ENCODE measurements at regions of chr11 and their contacts with region 1.

Region 1: GRCh38 chr11:1882519-1883238 is 9.0 kb downstream of the PRR33 start:
- DNase-seq: peak; percentile 97
- H3K4me3 ChIP-seq: no peak overlapping the region; a peak in 1 of 4 replicates
- H3K27ac ChIP-seq: peak overlapping the region in 1 of 2 experiments; percentile 72; a peak in 1 of 4 replicates
- H3K4me1 ChIP-seq: peaks cover 0 to 19% of the 10 kb centered on the region in 2 experiments; a peak in 1 of 4 replicates
- H3K27me3 ChIP-seq: no peaks in the 10 kb centered on the region
- CTCF ChIP-seq: peak; percentile 82
- EP300 ChIP-seq: no peak
- RAD21 ChIP-seq: peak; percentile 89

Region 2: GRCh38 chr11:1837171-1838076 is 45.3 kb before region 1 on chr11:
- CTCF ChIA-PET with region 1: interaction called, 64 read pairs
- POLR2A ChIA-PET with region 1: no interaction called
- DNase-seq: peak; percentile 97
- H3K4me3 ChIP-seq: no peak overlapping the region
- H3K27ac ChIP-seq: peak overlapping the region in 1 of 2 experiments; percentile 60; a peak in 1 of 4 replicates
- H3K4me1 ChIP-seq: peaks cover 0 to 39% of the 10 kb centered on the region in 2 experiments; a peak in 1 of 4 replicates
- H3K27me3 ChIP-seq: no peaks in the 10 kb centered on the region
- CTCF ChIP-seq: peak; percentile 80
- EP300 ChIP-seq: no peak
- RAD21 ChIP-seq: peak; percentile 93

Region 3: GRCh38 chr11:1864831-1865665 is 17.6 kb before region 1 on chr11:
- CTCF ChIA-PET with region 1: interaction called, 12 read pairs
- POLR2A ChIA-PET with region 1: no interaction called
- DNase-seq: peak; percentile 77
- H3K4me3 ChIP-seq: no peak overlapping the region
- H3K27ac ChIP-seq: peak overlapping the region; percentile 50 to 61; a peak in 3 of 4 replicates
- H3K4me1 ChIP-seq: peaks cover 18 to 44% of the 10 kb centered on the region in 2 experiments; a peak in 3 of 4 replicates
- H3K27me3 ChIP-seq: no peaks in the 10 kb centered on the region
- CTCF ChIP-seq: no peak
- EP300 ChIP-seq: no peak
- RAD21 ChIP-seq: no peak

Region 4: DNA sequence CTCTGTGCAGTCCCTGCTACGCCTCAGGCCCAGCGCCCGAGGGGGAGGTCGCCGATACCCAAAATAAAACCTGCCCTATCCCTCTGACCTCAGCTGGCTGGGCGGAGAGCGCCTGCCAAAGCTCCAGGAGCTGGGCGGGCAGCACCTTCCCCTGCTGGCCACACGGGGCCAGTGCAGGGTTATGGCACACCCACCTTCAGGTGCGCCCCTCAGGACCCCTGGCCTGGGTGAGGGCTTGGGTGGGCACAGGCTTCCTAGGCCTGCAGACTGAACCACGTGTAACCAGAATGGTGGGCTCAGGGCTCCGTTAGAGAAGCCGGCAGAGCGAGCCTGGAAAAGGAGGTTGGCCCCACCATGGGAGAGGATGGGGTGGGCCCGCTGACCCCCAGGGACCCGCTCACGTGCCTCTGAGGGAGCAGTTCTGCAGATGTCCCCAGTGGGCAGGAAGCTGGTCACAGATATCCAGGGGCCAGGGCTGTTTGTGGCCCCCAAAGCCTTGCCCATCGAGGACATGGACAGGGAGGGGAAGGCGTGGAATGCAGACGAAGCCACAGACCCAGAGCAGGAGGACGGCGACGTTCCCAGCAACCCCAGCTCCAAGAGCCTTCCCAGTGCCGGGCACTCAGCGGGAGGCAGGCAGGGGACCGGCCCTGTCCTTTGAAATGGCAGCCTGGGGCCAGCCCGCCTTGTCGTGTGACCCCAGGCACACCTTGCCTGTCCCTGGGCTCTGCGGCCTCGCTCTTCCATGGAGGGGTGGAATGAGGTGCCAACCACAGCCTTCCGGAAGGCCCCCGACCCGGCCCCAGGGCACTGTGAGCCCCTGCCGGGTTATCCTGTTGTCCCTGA is 35.2 kb after region 1 on chr11:
- CTCF ChIA-PET with region 1: interaction called, 40 read pairs
- POLR2A ChIA-PET with region 1: interaction called, 3 read pairs
- DNase-seq: peak; percentile 59
- H3K4me3 ChIP-seq: no peak overlapping the region
- H3K27ac ChIP-seq: no peak overlapping the region
- H3K4me1 ChIP-seq: peaks cover 0 to 21% of the 10 kb centered on the region in 2 experiments; a peak in 1 of 4 replicates
- H3K27me3 ChIP-seq: no peaks in the 10 kb centered on the region
- CTCF ChIP-seq: peak; percentile 41; the same call in 1 of the 2 replicates
- EP300 ChIP-seq: no peak
- RAD21 ChIP-seq: no peak

Region 5: DNA sequence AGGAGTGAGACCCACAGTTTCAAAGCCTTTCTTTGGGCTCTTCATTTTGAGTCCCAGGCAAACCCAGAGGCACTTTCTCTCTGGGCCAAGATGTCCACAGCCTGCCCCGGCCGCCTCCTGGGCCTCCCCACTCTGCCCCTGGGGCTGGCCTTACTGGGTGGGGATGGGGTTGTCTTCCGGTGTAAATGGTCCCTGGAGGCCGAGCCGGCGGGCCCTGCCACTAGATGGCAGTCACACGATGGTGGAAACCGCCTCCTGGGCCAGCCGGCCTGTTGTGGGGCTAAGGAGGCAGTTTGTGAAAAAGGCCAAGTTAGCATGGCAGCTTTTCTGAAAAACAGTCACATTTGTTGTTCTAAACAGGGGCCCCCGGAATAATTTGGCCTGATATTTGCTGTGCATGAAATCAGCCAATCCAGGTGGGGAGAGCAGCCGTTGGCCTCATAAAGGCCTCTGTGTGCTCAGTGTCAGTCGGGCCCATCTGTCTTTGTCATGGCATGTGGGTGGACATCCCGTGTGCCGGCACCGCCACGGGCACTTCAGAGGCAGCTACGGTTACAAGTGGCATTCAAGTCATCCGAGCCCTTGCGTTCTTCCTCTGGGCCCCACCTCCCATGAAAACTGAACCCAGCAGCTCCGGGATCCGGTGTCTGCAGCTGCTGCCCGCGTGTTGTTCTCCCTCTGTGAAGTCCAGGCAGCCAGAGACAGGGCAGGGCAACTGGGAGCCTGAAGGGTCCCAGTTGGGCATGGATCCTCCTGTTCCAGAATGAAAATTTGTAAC is 71.0 kb after region 1 on chr11:
- CTCF ChIA-PET with region 1: interaction called, 74 read pairs
- POLR2A ChIA-PET with region 1: interaction called, 13 read pairs
- DNase-seq: no peak
- H3K4me3 ChIP-seq: no peak overlapping the region
- H3K27ac ChIP-seq: peak overlapping the region in 1 of 2 experiments; percentile 47; a peak in 1 of 4 replicates
- H3K4me1 ChIP-seq: no peaks in the 10 kb centered on the region; a peak in 1 of 4 replicates
- H3K27me3 ChIP-seq: no peaks in the 10 kb centered on the region
- CTCF ChIP-seq: no peak
- EP300 ChIP-seq: no peak
- RAD21 ChIP-seq: no peak

Region 6: DNA sequence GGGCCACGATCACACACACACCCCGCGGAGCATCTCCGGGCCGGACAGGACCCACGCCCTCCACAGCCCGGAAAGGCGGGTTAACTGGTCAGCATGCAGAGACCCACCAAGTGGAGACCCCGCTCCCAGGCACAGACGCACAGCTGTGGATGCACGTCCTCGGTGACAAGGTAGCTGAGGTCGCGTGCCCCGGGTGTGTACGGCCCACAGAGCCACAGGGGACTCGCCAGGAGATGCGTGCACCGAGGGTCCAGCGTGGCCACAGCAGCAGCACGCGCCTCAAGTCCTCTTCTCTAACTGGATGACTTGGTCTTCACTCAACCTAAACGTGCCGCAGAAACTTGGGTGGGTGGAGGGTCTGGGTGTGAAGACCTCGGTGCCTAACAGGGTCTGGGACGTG is 109.4 kb after region 1 on chr11:
- CTCF ChIA-PET with region 1: interaction called, 29 read pairs
- POLR2A ChIA-PET with region 1: interaction called, 20 read pairs
- DNase-seq: no peak
- H3K4me3 ChIP-seq: no peak overlapping the region
- H3K27ac ChIP-seq: peak overlapping the region in 1 of 2 experiments; percentile 43; a peak in 1 of 4 replicates
- H3K4me1 ChIP-seq: no peaks in the 10 kb centered on the region; a peak in 1 of 4 replicates
- H3K27me3 ChIP-seq: no peaks in the 10 kb centered on the region
- CTCF ChIP-seq: no peak
- EP300 ChIP-seq: no peak
- RAD21 ChIP-seq: no peak

Region 7: GRCh38 chr11:2142762-2143202 is 260.1 kb after region 1 on chr11:
- CTCF ChIA-PET with region 1: interaction called, 179 read pairs
- POLR2A ChIA-PET with region 1: no interaction called
- DNase-seq: no peak
- H3K4me3 ChIP-seq: no peak overlapping the region
- H3K27ac ChIP-seq: no peak overlapping the region; a peak in 1 of 4 replicates
- H3K4me1 ChIP-seq: no peaks in the 10 kb centered on the region; a peak in 1 of 4 replicates
- H3K27me3 ChIP-seq: peaks cover 72% of the 10 kb centered on the region
- CTCF ChIP-seq: no peak
- EP300 ChIP-seq: no peak
- RAD21 ChIP-seq: no peak